Activated CD4-positive, alpha-beta T cell treated with anti-CD3 and anti-CD28 coated beads, Interleukin-2, amount 10 ng/mL, durations not matched to agents 24 days and 14 days (primary cell): ENCODE measurements at regions of chr12 and their contacts with region 1.

Region 1: GRCh38 chr12:96985480-96986362 is 78.7 kb downstream of the NEDD1 start:
- DNase-seq: peak; percentile 83
- H3K4me3 Mint-ChIP-seq: peak overlapping the region; percentile 73
- H3K27ac Mint-ChIP-seq: no peak overlapping the region
- H3K4me1 Mint-ChIP-seq: peaks cover 2% of the 10 kb centered on the region
- H3K27me3 Mint-ChIP-seq: peaks cover 38% of the 10 kb centered on the region

Region 2: GRCh38 chr12:96578526-96579125 is 407.1 kb before region 1 on chr12:
- intact Hi-C with region 1: loop called (anchors 2 kb)
- DNase-seq: peak; percentile 74
- H3K4me3 Mint-ChIP-seq: no peak overlapping the region
- H3K27ac Mint-ChIP-seq: no peak overlapping the region
- H3K4me1 Mint-ChIP-seq: no peaks in the 10 kb centered on the region
- H3K27me3 Mint-ChIP-seq: peaks cover 11% of the 10 kb centered on the region

Region 3: DNA sequence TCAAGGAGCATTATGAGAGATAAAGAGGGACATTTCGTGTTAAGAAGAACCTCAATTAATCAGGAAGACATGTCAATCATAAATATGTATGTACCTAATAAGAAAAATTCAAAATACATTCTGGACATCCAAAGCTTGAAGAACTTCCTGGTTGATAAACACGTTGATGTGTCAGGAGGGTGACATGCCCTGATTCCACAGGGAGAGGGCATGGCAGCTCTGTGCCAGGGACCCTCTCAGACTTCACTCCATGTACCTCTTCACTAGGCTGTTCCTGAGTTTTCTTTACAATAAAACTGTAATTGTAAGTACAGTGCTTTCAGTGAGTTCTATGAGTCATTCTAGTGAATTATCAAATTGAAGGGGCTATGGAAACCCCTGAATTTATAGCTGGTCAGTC is 332.9 kb before region 1 on chr12:
- intact Hi-C with region 1: no loop called
- DNase-seq: no peak
- H3K4me3 Mint-ChIP-seq: no peak overlapping the region
- H3K27ac Mint-ChIP-seq: no peak overlapping the region
- H3K4me1 Mint-ChIP-seq: no peaks in the 10 kb centered on the region
- H3K27me3 Mint-ChIP-seq: peaks cover 4% of the 10 kb centered on the region

Region 4: GRCh38 chr12:96729886-96730285 is 255.8 kb before region 1 on chr12:
- intact Hi-C with region 1: no loop called
- DNase-seq: no peak
- H3K4me3 Mint-ChIP-seq: no peak overlapping the region
- H3K27ac Mint-ChIP-seq: no peak overlapping the region
- H3K4me1 Mint-ChIP-seq: no peaks in the 10 kb centered on the region
- H3K27me3 Mint-ChIP-seq: peaks cover 11% of the 10 kb centered on the region

Region 5: DNA sequence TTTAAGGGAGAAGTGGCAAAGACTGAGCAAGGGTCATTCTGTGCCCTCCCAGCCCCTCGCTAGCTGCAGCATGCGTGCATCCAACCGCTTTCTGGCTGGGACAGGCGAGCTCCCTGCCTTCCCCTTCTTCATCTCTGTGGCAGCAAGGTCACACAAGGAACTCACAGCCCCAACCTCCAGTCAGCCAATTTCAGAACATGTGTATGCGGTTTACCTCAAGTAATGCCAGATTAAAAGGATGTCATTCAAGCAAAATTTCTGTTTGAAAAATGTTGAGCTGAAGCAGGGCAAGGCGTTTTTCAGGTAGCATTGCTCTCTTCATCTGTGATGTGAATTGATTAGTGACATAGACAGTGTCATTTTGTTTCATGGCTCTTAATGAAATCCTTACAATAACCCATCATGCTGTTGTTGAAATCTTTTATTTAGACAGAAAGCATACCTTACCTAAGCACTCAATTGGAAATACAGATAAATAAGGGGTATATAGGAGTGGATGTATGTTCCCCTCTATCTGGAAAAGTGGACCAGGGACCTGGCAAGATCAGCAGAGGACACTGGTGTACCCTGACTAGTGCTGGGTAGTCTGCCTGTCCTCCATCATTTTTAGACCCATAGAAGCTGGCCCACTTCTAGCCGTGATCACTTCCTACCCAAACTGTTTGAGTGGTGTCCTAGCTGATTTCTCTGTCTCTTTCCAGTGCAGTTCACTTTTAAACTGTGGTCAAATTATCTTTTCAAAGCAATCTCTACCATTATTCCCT is 161.5 kb before region 1 on chr12:
- intact Hi-C with region 1: loop called (anchors 5 kb)
- DNase-seq: peak; percentile 60
- H3K4me3 Mint-ChIP-seq: no peak overlapping the region
- H3K27ac Mint-ChIP-seq: no peak overlapping the region
- H3K4me1 Mint-ChIP-seq: no peaks in the 10 kb centered on the region
- H3K27me3 Mint-ChIP-seq: peaks cover 5% of the 10 kb centered on the region

Region 6: DNA sequence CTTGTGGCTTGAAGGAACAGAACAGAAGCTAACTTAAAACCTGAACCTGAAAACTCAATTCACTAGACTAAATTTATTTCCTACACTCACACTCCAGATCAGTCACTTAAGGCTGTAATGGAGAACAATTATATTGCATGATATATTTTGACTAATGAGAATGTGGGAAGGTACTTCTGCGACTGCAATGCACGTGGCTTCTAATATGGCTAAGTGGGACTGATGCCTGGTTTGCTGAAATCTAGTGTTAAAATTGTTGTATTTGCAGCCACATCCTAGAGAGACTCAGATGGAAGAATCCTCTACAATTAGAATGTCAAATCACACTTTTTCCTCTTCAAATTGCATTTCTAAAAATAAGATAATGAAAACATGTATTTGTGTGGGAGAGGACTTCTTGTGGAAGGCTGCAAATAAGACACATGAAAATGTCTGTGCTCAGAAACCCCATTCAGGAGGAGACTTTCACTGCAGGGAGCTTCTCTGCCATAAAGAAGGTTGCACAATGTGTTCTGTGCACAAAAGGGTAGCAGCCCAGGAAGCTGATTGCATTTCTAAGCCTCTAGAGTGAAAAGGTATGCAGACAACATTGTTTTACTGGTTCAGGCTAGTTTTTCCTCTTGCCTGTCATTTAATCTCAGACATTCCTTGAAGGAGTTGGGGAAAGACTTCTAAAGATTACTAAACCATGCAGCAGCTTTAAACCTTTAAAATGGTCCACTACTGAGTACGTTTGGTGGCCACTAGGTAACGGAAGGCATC is 145.7 kb after region 1 on chr12:
- intact Hi-C with region 1: no loop called
- DNase-seq: no peak
- H3K4me3 Mint-ChIP-seq: no peak overlapping the region
- H3K27ac Mint-ChIP-seq: no peak overlapping the region
- H3K4me1 Mint-ChIP-seq: no peaks in the 10 kb centered on the region
- H3K27me3 Mint-ChIP-seq: peaks cover 2% of the 10 kb centered on the region

Region 7: DNA sequence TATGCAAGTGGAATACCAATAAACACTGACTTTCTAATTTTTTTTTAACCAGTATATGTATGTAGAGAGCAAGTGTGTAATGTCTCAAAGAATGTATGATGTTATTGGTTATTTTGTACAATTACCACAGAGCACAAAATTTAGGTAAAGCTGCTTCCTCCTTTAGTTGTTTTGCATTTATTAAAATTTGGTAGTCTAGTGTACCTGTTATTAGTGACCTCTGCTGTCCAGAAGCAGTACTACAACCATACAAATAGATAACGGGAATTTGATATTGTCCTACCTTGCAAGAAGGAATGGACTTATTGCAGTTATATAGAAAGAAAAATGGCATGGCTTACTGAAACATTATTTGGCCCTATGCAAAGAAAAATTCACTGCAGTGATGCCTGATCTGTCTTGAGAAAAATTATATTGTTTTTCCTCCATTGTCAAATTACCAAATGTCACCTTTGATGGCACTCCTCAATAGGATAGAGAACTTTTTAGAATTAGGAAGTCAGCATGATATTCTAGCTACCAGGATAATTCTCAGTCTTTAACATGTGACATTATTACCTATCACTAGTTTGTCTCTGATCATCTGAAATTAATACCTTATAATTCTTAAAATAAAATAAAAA is 323.0 kb after region 1 on chr12:
- intact Hi-C with region 1: loop called (anchors 1 kb)
- DNase-seq: peak; percentile 73
- H3K4me3 Mint-ChIP-seq: no peak overlapping the region
- H3K27ac Mint-ChIP-seq: no peak overlapping the region
- H3K4me1 Mint-ChIP-seq: no peaks in the 10 kb centered on the region
- H3K27me3 Mint-ChIP-seq: peaks cover 11% of the 10 kb centered on the region

Region 8: GRCh38 chr12:98397316-98398105 is 1411.8 kb after region 1 on chr12:
- intact Hi-C with region 1: loop called (anchors 5 kb)
- DNase-seq: peak; percentile 95
- H3K4me3 Mint-ChIP-seq: peak overlapping the region; percentile 72
- H3K27ac Mint-ChIP-seq: peak overlapping the region; percentile 10
- H3K4me1 Mint-ChIP-seq: peaks cover 35% of the 10 kb centered on the region
- H3K27me3 Mint-ChIP-seq: peaks cover 6% of the 10 kb centered on the region